ENCODE measurements at regions of chr1 and their contacts with region 1.

Region 1: DNA sequence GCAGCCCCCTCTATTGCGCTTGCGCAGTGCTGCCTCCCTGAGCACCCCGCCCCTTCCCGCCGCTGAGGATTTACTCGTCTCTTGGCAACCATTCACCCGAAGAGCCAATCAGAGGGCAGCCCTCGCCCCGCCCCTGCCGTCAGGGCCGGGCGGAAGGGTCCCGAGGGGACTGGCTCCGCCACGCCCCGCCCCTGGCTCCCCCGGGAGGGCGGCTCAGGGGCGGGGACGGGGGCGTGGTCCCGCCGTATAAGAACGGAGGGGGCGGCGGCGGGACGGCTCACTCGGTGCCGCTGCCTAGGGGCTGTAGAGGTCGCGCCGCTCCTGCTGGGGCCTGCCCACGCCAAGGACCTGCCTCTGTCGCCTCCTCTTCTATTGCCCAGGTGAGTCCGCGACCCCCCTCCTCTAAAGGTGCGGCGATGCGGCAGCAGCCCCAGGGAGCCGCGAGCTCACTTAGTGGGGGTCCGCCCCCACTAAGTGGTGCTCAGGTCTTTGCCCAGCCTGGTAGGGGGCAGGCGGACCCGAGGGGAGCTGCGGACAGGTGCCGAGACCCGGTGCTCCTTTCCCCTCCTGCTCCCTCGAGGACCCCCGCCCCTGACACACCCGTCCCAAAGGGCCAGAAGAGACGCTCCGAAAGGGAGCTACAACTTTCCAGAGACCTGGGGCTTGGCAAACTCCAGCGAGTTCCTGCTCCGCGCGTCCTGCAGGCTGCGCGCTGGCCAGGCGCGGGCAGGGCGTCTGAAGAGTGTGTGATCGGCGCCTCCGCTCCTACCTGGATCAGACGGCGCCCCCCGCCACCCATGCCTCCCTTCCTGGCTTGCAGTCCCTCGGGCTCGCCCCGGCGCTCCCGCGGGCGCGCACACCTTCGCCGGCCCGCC is at the start of gene TENT5C:
- DNase-seq: peak; percentile 95
- H3K4me3 ChIP-seq: peak within 1 kb of the TSS; percentile 78
- H3K4me3 Mint-ChIP-seq: peak within 1 kb of the TSS; percentile 86
- H3K27ac Mint-ChIP-seq: peak within 1 kb of the TSS; percentile 69
- H3K4me1 ChIP-seq: no peaks in the 10 kb centered on the region
- H3K4me1 Mint-ChIP-seq: peaks cover 22% of the 10 kb centered on the region
- H3K27me3 ChIP-seq: no peaks in the 10 kb centered on the region
- H3K27me3 Mint-ChIP-seq: no peaks in the 10 kb centered on the region
- CTCF ChIP-seq: peak in 1 of 2 experiments; percentile 2
- total RNA-seq, gene TENT5C: 19.8 and 24.4 TPM in 2 replicates

Region 2: DNA sequence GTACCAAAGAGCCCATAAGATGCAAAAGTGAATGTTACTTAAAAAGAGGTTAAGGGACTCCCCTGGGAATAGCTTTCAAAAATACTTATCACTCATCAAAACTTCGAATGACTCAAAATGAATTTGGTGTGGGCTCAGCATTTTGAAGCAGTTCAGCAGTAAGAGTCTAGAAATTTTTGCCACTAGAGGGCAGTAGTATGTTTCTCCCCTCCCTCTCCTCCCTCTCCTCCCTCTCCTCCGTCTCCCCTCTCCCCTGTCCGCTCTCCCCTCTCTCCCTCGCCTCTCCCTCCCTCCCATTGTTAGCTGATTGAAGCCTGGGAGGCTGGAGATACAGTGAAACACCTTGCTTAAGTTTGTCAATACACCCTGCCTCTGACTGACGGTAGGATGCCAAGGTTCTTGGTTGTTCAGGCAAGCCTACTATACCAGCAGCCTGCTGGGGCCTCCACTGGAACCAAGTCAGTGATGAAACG is 71.0 kb before region 1 on chr1:
- CTCF ChIA-PET with region 1: interaction called, 9 read pairs
- POLR2A ChIA-PET with region 1: interaction called, 3 read pairs
- intact Hi-C with region 1: loop called (anchors 2 kb)
- DNase-seq: peak; percentile 52 to 60
- H3K4me3 ChIP-seq: no peak overlapping the region
- H3K4me3 Mint-ChIP-seq: no peak overlapping the region
- H3K27ac Mint-ChIP-seq: no peak overlapping the region
- H3K4me1 ChIP-seq: no peaks in the 10 kb centered on the region
- H3K4me1 Mint-ChIP-seq: no peaks in the 10 kb centered on the region
- H3K27me3 ChIP-seq: no peaks in the 10 kb centered on the region
- H3K27me3 Mint-ChIP-seq: no peaks in the 10 kb centered on the region
- CTCF ChIP-seq: peak; percentile 28 to 40

Region 3: DNA sequence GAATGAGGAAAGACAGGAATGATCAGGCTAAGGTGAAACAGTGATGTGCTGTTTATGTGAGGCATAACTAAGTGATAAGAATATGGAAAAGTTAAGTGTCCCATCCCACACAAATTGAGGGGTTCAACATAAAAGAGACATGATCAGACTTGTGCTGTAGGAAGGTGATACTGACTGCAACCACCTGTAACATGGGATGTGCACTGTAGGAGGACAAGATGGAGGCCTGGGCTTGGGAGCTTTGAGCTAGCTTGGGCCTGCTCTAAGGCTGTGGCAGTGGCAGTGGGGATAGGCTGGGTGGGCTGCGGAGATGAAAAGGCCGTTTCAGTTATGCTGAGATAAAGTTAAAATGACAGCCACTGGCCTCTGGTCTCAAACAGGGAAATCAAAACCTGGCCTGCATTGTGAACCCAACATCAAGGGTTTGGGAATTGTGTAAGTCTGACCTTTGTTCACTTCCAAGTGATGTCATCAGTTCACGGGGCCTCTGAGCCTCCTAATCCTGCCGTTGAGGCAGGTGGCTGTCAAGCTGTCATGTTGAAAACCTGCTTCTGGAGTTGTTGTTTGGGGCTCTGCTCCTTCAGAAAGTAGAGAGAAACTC is 61.4 kb before region 1 on chr1:
- CTCF ChIA-PET with region 1: no interaction called
- POLR2A ChIA-PET with region 1: no interaction called
- intact Hi-C with region 1: loop called (anchors 2 kb)
- DNase-seq: peak; percentile 59 to 65
- H3K4me3 ChIP-seq: no peak overlapping the region
- H3K4me3 Mint-ChIP-seq: no peak overlapping the region
- H3K27ac Mint-ChIP-seq: peak overlapping the region; percentile 13
- H3K4me1 ChIP-seq: peaks cover 12% of the 10 kb centered on the region
- H3K4me1 Mint-ChIP-seq: peaks cover 17% of the 10 kb centered on the region
- H3K27me3 ChIP-seq: no peaks in the 10 kb centered on the region
- H3K27me3 Mint-ChIP-seq: no peaks in the 10 kb centered on the region
- CTCF ChIP-seq: no peak

Region 4: DNA sequence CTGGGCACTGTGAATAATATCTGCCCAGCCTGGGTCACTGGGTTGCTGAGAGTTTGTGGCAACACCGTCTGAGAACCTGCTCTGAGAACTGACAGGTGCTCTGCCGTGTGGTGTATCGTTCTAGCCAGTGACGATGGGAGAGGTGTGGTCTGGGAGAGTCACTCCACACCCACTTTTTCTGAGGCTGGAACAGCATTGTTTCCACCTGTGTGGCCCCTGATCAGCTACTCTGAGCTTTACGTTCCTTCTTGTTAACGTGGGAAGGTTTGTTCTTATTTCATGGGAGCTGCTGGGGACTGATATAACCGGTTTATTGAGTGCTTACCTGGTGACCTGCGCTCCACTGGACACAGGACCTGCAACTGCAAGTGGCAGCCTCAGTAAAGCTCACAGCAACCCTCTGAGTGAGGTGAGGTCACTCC is 35.0 kb before region 1 on chr1:
- CTCF ChIA-PET with region 1: no interaction called
- POLR2A ChIA-PET with region 1: interaction called, 3 read pairs
- intact Hi-C with region 1: loop called (anchors 2 kb)
- DNase-seq: peak; percentile 53
- H3K4me3 ChIP-seq: no peak overlapping the region
- H3K4me3 Mint-ChIP-seq: peak overlapping the region; percentile 42
- H3K27ac Mint-ChIP-seq: no peak overlapping the region
- H3K4me1 ChIP-seq: peaks cover 11% of the 10 kb centered on the region; the same call in 1 of the 2 replicates
- H3K4me1 Mint-ChIP-seq: peaks cover 12% of the 10 kb centered on the region
- H3K27me3 ChIP-seq: no peaks in the 10 kb centered on the region
- H3K27me3 Mint-ChIP-seq: no peaks in the 10 kb centered on the region
- CTCF ChIP-seq: no peak